ENCODE measurements at regions of chr5 and their contacts with region 1.

Region 1: GRCh38 chr5:181207214-181208107 is 2.5 kb upstream of the TRIM7 start:
- DNase-seq: peak; percentile 91

Region 2: DNA sequence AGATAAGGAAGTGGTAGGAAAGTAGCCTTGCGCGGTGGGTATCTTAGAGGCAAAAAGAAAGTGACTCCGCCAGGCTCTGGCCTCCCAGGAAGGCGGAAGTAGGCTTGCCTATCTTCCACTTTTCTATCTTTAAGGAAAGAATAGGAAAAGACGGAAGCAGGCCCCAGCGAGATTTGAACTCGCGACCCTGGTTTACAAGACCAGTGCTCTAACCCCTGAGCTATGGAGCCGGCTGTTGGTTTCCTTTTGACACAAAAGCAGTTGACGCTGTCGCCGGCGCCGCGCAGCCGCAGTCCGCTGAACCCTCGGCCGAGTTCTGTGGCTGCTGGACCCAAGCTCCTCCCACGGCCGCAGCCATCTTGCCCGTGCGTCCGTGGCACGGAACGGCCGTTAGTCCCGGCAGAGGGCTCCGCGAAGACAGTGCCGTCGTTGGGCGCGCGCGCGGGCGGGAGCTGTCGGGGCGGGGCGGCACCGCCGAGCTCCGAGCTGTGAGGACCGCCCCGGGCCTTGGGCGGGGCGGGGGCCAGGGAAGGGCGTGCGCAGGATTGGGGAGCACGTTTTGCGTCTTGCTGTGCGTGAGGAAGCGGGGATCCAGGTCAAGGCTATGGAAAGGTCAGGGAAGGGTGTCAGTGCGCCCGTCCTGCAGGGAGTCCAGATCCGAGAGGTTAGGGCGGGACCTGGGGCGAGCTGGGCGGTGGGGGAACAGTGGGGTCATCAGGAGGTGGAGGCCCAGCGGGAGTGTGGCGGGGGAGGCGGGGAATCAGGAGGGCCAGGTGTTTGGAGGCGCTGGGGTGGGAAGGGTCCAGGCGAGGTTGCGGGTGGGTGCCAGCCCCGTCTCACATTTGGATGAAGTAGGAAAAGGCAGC is 15.7 kb before region 1 on chr5:
- intact Hi-C with region 1: loop called in 1 of 2 experiments (anchors 2 kb)
- DNase-seq: peak; percentile 98

Measured in posterior vena cava (tissue), 2 donors.